IMR-90 (cell line): ENCODE measurements at regions of chr22 and their contacts with region 1.

Region 1: GRCh38 chr22:31530823-31531195 is 34.5 kb downstream of the SFI1 start:
- DNase-seq: no peak
- ATAC-seq: peak; percentile 84
- H3K4me3 ChIP-seq: no peak overlapping the region
- H3K27ac ChIP-seq: peak overlapping the region; percentile 73; the same call in 1 of the 2 replicates
- H3K4me1 ChIP-seq: peaks cover 10% of the 10 kb centered on the region
- H3K27me3 ChIP-seq: no peaks in the 10 kb centered on the region
- CTCF ChIP-seq: no peak
- POLR2A ChIP-seq: no peak
- RAD21 ChIP-seq: no peak

Region 2: GRCh38 chr22:31496007-31496734 is 34.6 kb before region 1 on chr22 and contains the start of gene SFI1:
- CTCF ChIA-PET with region 1: interaction called, 3 read pairs
- POLR2A ChIA-PET with region 1: no interaction called
- dilution Hi-C with region 1: no loop called
- in situ Hi-C with region 1: no loop called
- intact Hi-C with region 1: loop called (anchors 5 kb)
- DNase-seq: peak; percentile 87
- ATAC-seq: peak; percentile 98
- H3K4me3 ChIP-seq: peak within 1 kb of the TSS; percentile 77
- H3K27ac ChIP-seq: peak within 1 kb of the TSS; percentile 80
- H3K4me1 ChIP-seq: no peaks in the 10 kb centered on the region
- H3K27me3 ChIP-seq: no peaks in the 10 kb centered on the region
- CTCF ChIP-seq: peak; percentile 27
- POLR2A ChIP-seq: no peak; the same call in 1 of the 2 replicates
- RAD21 ChIP-seq: no peak
- total RNA-seq, gene SFI1: 8.9 and 9.9 TPM in 2 replicates